Endothelial cell of umbilical vein (primary cell): ENCODE measurements at regions of chr7 and their contacts with region 1.

Region 1: GRCh38 chr7:23474094-23474828 is 4.0 kb upstream of the IGF2BP3 start:
- DNase-seq: peak; percentile 95
- H3K4me3 ChIP-seq: peak overlapping the region; percentile 11 to 74 (median 50)
- H3K27ac ChIP-seq: peak overlapping the region; percentile 29
- H3K4me1 ChIP-seq: peaks cover 19% of the 10 kb centered on the region
- H3K27me3 ChIP-seq: peaks cover 27 to 46% of the 10 kb centered on the region in 2 experiments
- CTCF ChIP-seq: no peak
- POLR2A ChIP-seq: peak; percentile 68

Region 2: DNA sequence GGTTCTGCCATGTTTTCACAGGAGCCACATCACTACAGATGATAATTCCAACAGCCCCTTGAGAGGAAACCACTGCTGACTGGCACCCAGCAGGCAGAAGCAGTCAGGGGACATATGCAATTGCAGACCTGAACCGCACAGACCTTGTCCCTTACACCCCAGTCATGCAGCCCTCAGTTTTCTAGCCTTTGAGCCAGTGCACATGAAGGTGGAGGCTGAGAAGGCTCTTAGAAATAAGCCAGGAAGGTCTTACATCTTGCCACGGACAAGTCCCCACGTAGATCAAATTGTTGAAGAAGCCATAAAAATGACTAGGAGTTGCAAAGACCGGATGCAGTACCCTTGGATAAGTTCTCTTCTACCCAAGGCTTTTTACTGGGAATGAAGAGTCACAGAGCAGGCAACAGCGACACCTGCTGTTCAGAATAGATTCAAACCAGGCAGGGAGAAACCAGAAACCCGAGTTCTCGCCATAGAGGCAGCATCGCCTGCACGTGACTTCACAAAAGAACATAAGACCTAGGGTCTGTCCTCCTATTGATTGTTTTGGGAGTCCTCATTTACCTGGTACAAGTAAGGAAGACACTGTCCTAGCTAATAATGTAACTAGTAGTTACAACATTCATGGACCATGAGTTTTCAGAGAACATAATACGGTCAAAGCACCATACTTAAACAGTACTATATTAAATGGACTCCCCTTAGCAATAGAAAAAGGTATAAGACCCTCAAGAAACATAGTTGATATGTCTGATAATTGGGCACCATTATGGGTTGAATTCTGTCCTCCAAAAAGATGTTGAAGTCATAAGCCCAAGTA is 985.4 kb before region 1 on chr7:
- CTCF ChIA-PET with region 1: no interaction called
- POLR2A ChIA-PET with region 1: no interaction called
- dilution Hi-C with region 1: no loop called
- intact Hi-C with region 1: no loop called
- DNase-seq: peak; percentile 86
- H3K4me3 ChIP-seq: no peak overlapping the region
- H3K27ac ChIP-seq: peak overlapping the region; percentile 44
- H3K4me1 ChIP-seq: peaks cover 42% of the 10 kb centered on the region
- H3K27me3 ChIP-seq: no peaks in the 10 kb centered on the region
- CTCF ChIP-seq: peak; percentile 74 to 90
- POLR2A ChIP-seq: no peak

Region 3: DNA sequence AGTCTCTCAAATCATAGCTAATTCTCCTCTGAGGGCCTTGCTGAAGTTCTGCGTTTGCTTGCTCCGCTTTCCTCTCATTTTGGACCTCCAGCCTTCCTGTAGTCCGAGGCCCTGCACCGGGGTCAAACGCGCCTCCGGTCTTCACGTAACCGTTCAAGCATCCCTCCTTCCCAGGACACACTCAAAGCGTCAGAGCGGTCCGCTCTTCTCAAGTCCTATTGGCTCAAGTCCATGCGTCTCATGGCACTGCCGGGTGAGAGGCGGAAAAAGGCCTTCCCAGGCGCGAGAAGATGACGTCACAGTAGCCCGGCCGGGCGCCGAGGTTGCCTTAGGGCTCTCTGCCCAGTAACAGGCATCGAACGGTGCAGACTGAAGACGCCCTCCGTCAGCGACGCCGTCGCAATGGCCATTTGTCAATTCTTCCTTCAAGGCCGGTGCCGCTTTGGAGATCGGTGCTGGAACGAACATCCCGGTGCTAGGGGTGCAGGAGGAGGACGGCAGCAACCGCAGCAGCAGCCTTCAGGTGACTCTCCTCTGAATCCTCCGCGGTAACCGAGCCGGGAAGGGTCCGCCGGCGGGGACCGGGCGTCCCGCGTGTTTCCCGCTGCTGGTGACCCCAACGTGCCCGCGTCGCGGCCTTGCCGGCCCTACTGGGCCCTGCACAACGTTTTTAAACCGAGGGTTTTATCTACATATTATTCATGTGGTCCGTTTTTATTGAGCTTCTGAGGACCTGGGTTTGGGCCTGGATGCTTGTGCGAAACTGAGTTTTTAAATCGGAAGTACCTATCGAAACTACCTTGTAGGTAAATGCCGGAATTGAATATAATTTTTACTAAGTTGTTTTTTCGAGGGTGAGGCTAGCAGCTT is 292.3 kb before region 1 on chr7 and contains the start of gene NUP42:
- CTCF ChIA-PET with region 1: no interaction called
- POLR2A ChIA-PET with region 1: interaction called, 4 read pairs
- dilution Hi-C with region 1: no loop called
- intact Hi-C with region 1: loop called (anchors 10 kb)
- DNase-seq: peak; percentile 99
- H3K4me3 ChIP-seq: peak within 1 kb of the TSS; percentile 77 to 94 (median 90)
- H3K27ac ChIP-seq: peak within 1 kb of the TSS; percentile 54
- H3K4me1 ChIP-seq: peaks cover 14% of the 10 kb centered on the region
- H3K27me3 ChIP-seq: no peaks in the 10 kb centered on the region
- CTCF ChIP-seq: no peak
- POLR2A ChIP-seq: peak; percentile 57
- total RNA-seq, gene NUP42: 38.6 and 40.0 TPM in 2 replicates

Region 4: GRCh38 chr7:23334482-23335056 is 139.7 kb before region 1 on chr7:
- CTCF ChIA-PET with region 1: no interaction called
- POLR2A ChIA-PET with region 1: no interaction called
- dilution Hi-C with region 1: no loop called
- intact Hi-C with region 1: loop called (anchors 2 kb)
- DNase-seq: peak; percentile 99
- H3K4me3 ChIP-seq: no peak overlapping the region
- H3K27ac ChIP-seq: peak overlapping the region; percentile 93
- H3K4me1 ChIP-seq: peaks cover 46% of the 10 kb centered on the region
- H3K27me3 ChIP-seq: no peaks in the 10 kb centered on the region
- CTCF ChIP-seq: no peak
- POLR2A ChIP-seq: peak; percentile 76

Region 5: DNA sequence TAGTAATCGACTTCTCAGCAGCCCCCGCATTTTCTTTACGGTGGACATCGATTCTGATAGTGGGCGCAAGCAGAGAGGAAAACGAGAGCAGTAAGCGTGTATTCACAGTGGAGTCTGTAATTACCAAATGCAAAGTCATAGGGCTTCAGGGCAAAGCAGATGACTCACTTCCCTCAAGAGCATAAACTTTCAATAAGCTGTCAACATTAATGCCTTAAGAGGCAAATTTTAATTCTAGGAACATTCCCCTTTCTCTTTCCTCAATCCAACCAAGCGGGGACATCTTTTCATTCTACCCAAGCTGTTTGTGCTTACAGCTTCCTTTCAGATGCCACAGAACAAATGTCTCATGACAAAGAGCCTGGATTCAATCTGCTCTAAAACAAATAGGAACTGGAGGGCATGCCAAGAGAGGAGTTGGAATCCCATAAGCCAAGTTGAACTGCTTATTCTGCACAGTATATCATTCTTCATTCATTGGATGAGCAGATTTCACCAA is 126.5 kb before region 1 on chr7:
- CTCF ChIA-PET with region 1: no interaction called
- POLR2A ChIA-PET with region 1: no interaction called
- dilution Hi-C with region 1: no loop called
- intact Hi-C with region 1: loop called (anchors 2 kb)
- DNase-seq: peak; percentile 88
- H3K4me3 ChIP-seq: peak overlapping the region; percentile 27 to 67 (median 61)
- H3K27ac ChIP-seq: peak overlapping the region; percentile 88
- H3K4me1 ChIP-seq: peaks cover 80% of the 10 kb centered on the region
- H3K27me3 ChIP-seq: no peaks in the 10 kb centered on the region
- CTCF ChIP-seq: no peak
- POLR2A ChIP-seq: peak; percentile 44

Region 6: DNA sequence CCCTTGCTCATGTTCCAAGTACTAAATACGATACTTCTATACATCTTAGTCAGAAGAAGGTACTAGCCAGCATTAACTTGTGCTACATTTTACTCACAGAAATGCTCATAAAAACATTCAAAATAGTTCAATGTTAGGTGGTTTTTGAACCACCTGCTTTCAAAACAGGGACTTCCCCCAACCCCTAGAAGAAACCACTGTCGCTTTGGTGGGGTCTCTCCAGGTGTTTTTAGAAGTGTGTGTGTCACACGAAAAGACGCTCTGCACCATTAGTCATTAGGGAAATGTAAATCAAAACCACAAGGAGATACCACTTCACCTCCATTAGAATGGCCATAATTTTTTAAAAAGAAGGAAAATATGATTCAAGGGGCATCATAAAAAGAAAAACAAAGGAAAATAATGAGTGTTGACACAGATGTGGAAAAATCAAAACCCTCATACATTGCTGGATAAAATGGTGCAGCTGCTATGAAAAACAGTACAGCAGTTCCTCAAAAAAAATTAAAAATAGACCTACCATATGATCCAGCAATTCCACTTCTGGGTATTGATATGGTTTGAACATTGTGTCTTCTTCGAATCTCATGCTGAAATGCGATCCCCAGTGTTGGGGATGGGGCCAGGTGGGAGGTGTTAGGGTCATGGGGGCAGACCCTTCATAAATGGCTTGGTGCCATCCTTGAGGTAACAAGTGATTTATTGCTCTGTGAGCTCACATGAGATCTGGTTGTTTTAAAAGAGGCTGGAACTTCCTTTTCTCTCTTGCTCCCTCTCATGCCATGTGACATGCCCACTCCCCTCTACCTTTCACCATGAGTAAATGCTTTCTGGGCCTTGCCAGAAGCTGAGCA is 100.9 kb before region 1 on chr7:
- CTCF ChIA-PET with region 1: no interaction called
- POLR2A ChIA-PET with region 1: no interaction called
- dilution Hi-C with region 1: no loop called
- intact Hi-C with region 1: loop called (anchors 2 kb)
- DNase-seq: peak; percentile 92
- H3K4me3 ChIP-seq: no peak overlapping the region
- H3K27ac ChIP-seq: peak overlapping the region; percentile 69
- H3K4me1 ChIP-seq: peaks cover 55% of the 10 kb centered on the region
- H3K27me3 ChIP-seq: no peaks in the 10 kb centered on the region
- CTCF ChIP-seq: no peak
- POLR2A ChIP-seq: peak; percentile 39

Region 7: GRCh38 chr7:23490357-23491135 is 16.3 kb after region 1 on chr7:
- CTCF ChIA-PET with region 1: interaction called, 3 read pairs
- POLR2A ChIA-PET with region 1: no interaction called
- dilution Hi-C with region 1: no loop called
- intact Hi-C with region 1: loop called (anchors 2 kb)
- DNase-seq: peak; percentile 48
- H3K4me3 ChIP-seq: peak overlapping the region; percentile 6 to 58 (median 45)
- H3K27ac ChIP-seq: peak overlapping the region; percentile 56
- H3K4me1 ChIP-seq: peaks cover 2% of the 10 kb centered on the region
- H3K27me3 ChIP-seq: no peaks in the 10 kb centered on the region
- CTCF ChIP-seq: no peak
- POLR2A ChIP-seq: peak; percentile 47

Region 8: DNA sequence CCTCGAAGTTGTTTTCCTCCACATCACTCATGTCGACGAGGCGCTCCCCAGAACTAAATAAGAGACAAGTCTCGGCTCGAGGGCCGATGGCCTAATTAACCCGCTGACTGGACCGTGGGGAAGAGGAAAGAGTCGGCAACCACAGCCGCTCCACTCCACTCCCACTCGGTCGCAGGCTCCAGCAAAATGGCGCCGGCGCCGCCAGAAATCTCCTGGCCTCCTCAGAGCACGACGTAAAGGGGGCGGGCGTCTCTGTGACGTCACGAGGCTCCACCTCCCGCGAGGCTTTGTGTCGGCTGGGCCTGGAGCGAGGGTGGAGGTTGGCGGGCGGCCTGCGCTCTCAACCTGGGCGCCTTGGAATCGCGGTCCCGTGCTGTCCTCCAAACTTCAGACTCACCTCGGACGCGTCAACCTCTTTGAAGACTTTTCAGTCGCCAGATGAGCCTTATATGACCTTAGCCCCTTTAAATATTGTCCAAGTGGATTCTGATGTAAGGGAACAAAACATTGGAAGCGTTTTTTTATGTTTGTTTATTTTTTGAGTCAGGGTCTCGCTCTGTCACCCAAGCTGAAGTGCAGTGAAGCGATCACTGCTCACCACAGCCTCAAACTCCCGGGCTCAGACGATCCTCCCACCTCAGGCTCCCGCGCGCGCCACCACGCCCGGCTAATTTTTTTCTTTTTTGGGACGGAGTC is 57.7 kb after region 1 on chr7 and contains the start of gene TRA2A:
- CTCF ChIA-PET with region 1: no interaction called
- POLR2A ChIA-PET with region 1: no interaction called
- dilution Hi-C with region 1: no loop called
- intact Hi-C with region 1: loop called (anchors 1 kb)
- DNase-seq: peak; percentile 94
- H3K4me3 ChIP-seq: peak within 1 kb of the TSS; percentile 83 to 99 (median 88)
- H3K27ac ChIP-seq: peak within 1 kb of the TSS; percentile 100
- H3K4me1 ChIP-seq: peaks cover 30% of the 10 kb centered on the region
- H3K27me3 ChIP-seq: no peaks in the 10 kb centered on the region
- CTCF ChIP-seq: no peak
- POLR2A ChIP-seq: peak; percentile 99
- total RNA-seq, gene TRA2A: 105 and 112 TPM in 2 replicates

Region 9: GRCh38 chr7:23594879-23595604 is 120.8 kb after region 1 on chr7:
- CTCF ChIA-PET with region 1: no interaction called
- POLR2A ChIA-PET with region 1: no interaction called
- dilution Hi-C with region 1: no loop called
- intact Hi-C with region 1: no loop called
- DNase-seq: no peak
- H3K4me3 ChIP-seq: no peak overlapping the region
- H3K27ac ChIP-seq: no peak overlapping the region
- H3K4me1 ChIP-seq: peaks cover 12% of the 10 kb centered on the region
- H3K27me3 ChIP-seq: peaks cover 0 to 5% of the 10 kb centered on the region in 2 experiments
- CTCF ChIP-seq: no peak
- POLR2A ChIP-seq: no peak